ENCODE measurements at regions of chr4 and their contacts with region 1.

Region 1: GRCh38 chr4:17206829-17207801 is 304.8 kb downstream of the QDPR start:
- DNase-seq: peak; percentile 35
- H3K4me3 ChIP-seq: no peak overlapping the region
- H3K27ac ChIP-seq: peak overlapping the region; percentile 6
- H3K4me1 ChIP-seq: peaks cover 14% of the 10 kb centered on the region
- CTCF ChIP-seq: no peak

Region 2: DNA sequence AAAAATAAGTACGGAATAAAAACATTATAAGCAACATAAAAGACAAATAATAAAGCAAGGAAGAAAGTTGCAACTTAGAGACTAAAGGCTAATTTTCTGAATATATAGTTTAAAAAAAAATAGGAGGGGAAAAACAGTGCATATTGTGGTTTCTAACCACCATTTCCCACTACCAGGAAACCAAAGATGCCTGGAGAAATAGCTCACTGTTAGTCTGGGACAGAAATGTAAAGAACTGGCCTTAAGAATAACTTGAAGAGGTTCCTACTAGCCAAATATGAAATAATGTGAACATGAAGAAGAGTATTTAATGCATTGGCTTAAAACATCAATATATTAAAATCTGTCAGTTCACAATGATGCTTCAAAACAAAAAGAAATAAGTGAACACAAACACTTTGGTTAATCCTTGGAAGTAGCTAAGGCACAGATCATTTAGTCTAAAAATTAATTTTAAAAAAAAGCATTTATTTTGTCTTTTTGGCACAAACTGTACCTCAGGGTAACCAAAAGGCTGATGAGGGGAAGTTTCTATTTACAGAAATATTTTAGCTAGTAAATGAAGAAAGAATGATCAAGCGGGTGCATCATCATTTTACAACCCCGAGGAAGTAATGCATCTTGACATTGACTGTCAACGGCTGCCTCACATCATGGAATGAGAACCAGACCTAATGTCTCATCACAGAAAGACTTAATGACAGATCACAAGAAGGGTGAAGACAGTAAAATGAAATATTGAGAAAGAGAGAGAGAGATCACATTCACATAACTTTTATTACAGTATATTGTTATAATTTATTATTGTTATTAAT is 11.4 kb before region 1 on chr4:
- CTCF ChIA-PET with region 1: no interaction called
- POLR2A ChIA-PET with region 1: no interaction called
- intact Hi-C with region 1: no loop called
- DNase-seq: no peak
- H3K4me3 ChIP-seq: no peak overlapping the region
- H3K27ac ChIP-seq: no peak overlapping the region
- H3K4me1 ChIP-seq: no peaks in the 10 kb centered on the region
- CTCF ChIP-seq: no peak

Region 3: DNA sequence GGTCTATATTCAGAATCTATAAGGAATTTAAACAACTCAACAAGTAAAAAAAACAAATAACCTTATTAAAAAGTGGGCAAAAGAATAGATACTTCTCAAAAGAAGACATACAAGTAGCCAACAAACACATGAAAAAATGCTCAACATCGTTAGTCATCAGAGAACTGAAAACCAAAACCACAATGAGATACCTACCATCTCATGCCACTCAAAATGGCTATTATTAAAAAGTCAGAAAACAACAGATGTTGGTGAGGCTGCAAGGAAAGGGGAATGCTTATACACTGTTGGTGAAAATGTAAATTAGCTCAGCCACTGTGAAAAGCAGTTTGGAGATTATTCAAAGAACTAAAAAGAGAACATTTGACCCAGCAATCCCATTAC is 103.1 kb after region 1 on chr4:
- CTCF ChIA-PET with region 1: no interaction called
- POLR2A ChIA-PET with region 1: interaction called, 3 read pairs
- intact Hi-C with region 1: loop called (anchors 5 kb)
- DNase-seq: peak; percentile 23
- H3K4me3 ChIP-seq: no peak overlapping the region
- H3K27ac ChIP-seq: no peak overlapping the region
- H3K4me1 ChIP-seq: peaks cover 34% of the 10 kb centered on the region
- CTCF ChIP-seq: no peak